Heart left ventricle (tissue), 16 donors: ENCODE measurements at regions of chr12 and their contacts with region 1.

Region 1: DNA sequence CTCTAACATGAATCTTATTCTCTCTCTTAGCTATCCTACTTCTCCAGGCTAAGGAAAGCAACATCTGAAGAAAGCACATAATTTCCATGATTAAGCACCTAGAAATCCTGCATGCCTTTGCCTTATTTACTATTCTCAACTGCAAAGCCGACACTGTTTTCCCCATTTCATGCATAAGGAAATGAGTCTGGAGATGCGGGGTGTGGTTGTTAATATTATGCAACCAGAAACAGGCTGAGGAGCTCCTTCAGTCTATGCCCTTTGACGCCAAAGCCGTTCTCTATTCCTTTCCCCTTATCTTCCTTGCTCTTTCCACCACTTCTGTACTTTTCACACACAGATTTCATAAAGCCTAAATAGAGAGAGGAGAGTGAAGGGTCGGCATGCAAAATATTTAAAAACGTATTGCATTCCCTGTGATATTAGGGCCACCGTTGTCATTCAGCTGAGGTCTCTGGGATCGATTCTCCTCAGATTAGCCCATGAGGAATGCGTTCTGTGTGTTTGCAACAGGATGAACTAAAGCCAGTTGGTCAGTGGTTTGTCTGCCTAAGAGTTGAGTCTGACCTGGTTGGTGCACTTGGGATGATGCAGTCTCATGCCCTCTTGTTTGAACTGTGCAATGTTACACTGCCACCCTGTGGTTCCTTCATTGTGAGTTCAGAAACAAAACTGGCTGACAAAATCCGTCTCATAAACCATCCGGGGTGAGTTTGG is 53.1 kb upstream of the PLEKHG7 start:
- DNase-seq: peak in 4 of 5 donors; percentile 33 to 58 (median 44)
- ATAC-seq: peak; percentile 86 to 93 (median 91)
- H3K4me3 ChIP-seq: no peak overlapping the region
- H3K27ac ChIP-seq: no peak overlapping the region
- H3K4me1 ChIP-seq: peaks cover 0 to 11% (median 0%) of the 10 kb centered on the region in 12 donors
- H3K27me3 ChIP-seq: no peaks in the 10 kb centered on the region
- CTCF ChIP-seq: peak; percentile 48 to 79 (median 69)
- POLR2A ChIP-seq: no peak

Region 2: GRCh38 chr12:91355150-91356006 is 1294.3 kb before region 1 on chr12:
- intact Hi-C with region 1: loop called in 9 of 10 experiments (anchors 2 to 10 kb)
- DNase-seq: peak; percentile 43 to 67 (median 61)
- ATAC-seq: peak; percentile 71 to 96 (median 90)
- H3K4me3 ChIP-seq: no peak overlapping the region
- H3K27ac ChIP-seq: no peak overlapping the region
- H3K4me1 ChIP-seq: no peaks in the 10 kb centered on the region
- H3K27me3 ChIP-seq: no peaks in the 10 kb centered on the region
- CTCF ChIP-seq: peak; percentile 59 to 89 (median 78)
- POLR2A ChIP-seq: no peak

Region 3: GRCh38 chr12:91361864-91362263 is 1287.8 kb before region 1 on chr12:
- intact Hi-C with region 1: loop called (anchors 1 to 10 kb)
- DNase-seq: no peak
- ATAC-seq: peak in 1 of 4 donors; percentile 59
- H3K4me3 ChIP-seq: peak overlapping the region in 1 of 12 donors; percentile 12
- H3K27ac ChIP-seq: no peak overlapping the region
- H3K4me1 ChIP-seq: peaks cover 0 to 9% (median 0%) of the 10 kb centered on the region in 12 donors
- H3K27me3 ChIP-seq: no peaks in the 10 kb centered on the region
- CTCF ChIP-seq: peak; percentile 57 to 83 (median 74)
- POLR2A ChIP-seq: no peak

Region 4: DNA sequence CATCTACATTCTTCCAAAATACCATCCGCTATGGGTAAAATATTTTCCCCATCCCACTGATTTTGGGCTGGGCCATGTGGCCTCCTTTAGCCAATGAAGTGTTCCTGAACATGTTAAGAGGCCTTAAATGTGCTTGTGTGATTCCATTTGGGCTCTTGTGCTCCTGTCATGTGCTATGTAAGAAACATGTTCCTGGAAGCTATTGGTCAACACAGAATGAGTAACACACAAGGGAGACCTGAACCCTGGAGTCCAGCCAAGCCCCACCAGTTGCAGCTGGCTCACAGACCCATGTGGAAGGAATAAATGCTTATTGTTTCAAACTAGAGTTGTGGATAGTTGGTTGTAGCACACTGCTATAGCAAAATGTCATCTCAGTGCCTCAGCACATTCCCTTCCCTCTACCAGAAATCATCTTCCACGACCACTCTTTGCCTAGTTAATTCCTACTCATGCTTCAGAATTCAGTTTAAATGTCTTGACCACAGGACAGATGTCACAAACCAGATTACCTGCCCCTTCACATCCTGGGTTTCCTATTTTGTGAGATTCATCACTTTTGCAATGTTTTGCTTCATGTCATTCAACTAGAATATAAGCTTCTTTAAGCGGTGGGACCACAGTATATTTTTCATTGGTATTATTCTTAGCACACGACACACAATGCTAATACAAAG is 496.7 kb after region 1 on chr12:
- intact Hi-C with region 1: no loop called
- DNase-seq: no peak
- ATAC-seq: no peak
- H3K4me3 ChIP-seq: no peak overlapping the region
- H3K27ac ChIP-seq: no peak overlapping the region
- H3K4me1 ChIP-seq: no peaks in the 10 kb centered on the region
- H3K27me3 ChIP-seq: no peaks in the 10 kb centered on the region
- CTCF ChIP-seq: no peak
- POLR2A ChIP-seq: no peak